Activated CD4-positive, alpha-beta memory T cell treated with anti-CD3 and anti-CD28 coated beads for 36 hours (primary cell): ENCODE measurements at regions of chr3 and their contacts with region 1.

Region 1: DNA sequence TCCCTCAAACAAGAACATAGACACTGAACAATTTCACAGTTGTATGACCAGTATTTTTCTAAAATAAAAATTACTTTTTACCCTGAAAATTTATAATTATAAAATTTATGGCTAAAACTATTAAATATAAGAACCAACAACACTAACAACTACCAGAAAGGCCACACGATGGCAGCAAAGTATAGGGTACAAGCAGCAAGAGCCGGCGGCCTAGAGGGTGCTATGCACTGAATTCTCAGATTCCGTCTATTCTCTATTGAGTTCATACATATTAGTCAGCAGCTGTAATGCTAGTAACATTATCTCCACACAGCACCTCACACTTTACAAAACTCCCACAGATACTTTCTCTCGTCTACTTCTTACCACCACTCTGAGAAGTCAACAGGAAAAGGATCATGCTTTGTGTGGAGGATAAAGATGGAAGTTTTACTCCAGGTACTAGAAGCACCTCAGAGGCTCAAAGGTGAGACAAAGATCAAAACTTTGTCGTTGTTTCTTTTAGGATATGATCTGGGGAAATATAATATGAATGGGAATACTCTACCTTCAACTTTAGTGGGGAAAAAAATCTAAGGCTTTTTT is 160.5 kb downstream of the FGF12 start:
- DNase-seq: peak; percentile 74
- H3K4me3 Mint-ChIP-seq: no peak overlapping the region
- H3K27ac Mint-ChIP-seq: no peak overlapping the region
- H3K4me1 Mint-ChIP-seq: peaks cover 8% of the 10 kb centered on the region
- H3K27me3 Mint-ChIP-seq: peaks cover 9% of the 10 kb centered on the region

Region 2: GRCh38 chr3:192467230-192468140 is 99.3 kb before region 1 on chr3:
- CTCF ChIA-PET with region 1: interaction called, 3 read pairs
- POLR2A ChIA-PET with region 1: no interaction called
- intact Hi-C with region 1: loop called (anchors 5 kb)
- DNase-seq: peak; percentile 57
- H3K4me3 Mint-ChIP-seq: no peak overlapping the region
- H3K27ac Mint-ChIP-seq: no peak overlapping the region
- H3K4me1 Mint-ChIP-seq: no peaks in the 10 kb centered on the region
- H3K27me3 Mint-ChIP-seq: peaks cover 18% of the 10 kb centered on the region

Region 3: GRCh38 chr3:192802957-192803899 is 236.4 kb after region 1 on chr3:
- CTCF ChIA-PET with region 1: interaction called, 19 read pairs
- POLR2A ChIA-PET with region 1: no interaction called
- intact Hi-C with region 1: loop called (anchors 1 kb)
- DNase-seq: no peak
- H3K4me3 Mint-ChIP-seq: no peak overlapping the region
- H3K27ac Mint-ChIP-seq: no peak overlapping the region
- H3K4me1 Mint-ChIP-seq: no peaks in the 10 kb centered on the region
- H3K27me3 Mint-ChIP-seq: no peaks in the 10 kb centered on the region

Region 4: DNA sequence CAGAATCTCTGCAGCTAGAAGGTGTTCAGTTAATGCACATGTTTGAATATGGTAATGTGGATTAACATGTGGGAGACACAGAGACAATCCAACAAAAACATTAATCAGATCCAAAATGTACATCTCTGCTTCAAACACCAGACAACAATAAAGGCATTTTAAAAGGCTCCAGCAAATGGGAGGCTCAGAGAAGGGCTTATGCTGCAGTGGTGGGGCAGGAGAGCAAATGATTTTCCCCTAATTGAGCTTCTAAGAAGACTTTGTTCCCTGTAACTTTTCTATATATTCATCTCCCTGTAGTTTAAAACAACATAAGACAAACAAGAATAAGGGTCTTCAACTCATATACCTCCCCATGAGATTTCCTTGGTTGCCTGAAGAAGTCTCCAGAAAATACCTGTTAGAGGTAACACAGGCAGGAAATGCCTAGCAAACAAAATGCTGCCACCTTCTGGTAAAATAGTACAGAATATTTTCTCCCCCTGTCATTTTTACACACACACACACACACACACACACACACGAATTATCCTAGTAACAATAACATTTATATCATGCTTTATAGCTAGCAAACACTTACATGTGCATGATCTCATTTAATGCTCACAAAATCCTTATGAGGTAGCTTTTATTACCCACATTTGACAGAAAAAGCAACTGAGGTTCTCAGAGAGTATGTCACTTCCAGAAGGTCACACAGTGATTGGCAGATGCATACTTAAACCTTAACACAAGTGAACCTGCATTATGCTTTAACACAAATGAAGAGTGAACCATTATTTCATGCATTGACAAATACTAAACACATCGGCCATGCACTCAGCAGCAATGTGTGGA is 474.3 kb after region 1 on chr3:
- CTCF ChIA-PET with region 1: interaction called, 3 read pairs
- POLR2A ChIA-PET with region 1: no interaction called
- intact Hi-C with region 1: loop called (anchors 2 kb)
- DNase-seq: no peak
- H3K4me3 Mint-ChIP-seq: no peak overlapping the region
- H3K27ac Mint-ChIP-seq: no peak overlapping the region
- H3K4me1 Mint-ChIP-seq: no peaks in the 10 kb centered on the region
- H3K27me3 Mint-ChIP-seq: no peaks in the 10 kb centered on the region

Region 5: DNA sequence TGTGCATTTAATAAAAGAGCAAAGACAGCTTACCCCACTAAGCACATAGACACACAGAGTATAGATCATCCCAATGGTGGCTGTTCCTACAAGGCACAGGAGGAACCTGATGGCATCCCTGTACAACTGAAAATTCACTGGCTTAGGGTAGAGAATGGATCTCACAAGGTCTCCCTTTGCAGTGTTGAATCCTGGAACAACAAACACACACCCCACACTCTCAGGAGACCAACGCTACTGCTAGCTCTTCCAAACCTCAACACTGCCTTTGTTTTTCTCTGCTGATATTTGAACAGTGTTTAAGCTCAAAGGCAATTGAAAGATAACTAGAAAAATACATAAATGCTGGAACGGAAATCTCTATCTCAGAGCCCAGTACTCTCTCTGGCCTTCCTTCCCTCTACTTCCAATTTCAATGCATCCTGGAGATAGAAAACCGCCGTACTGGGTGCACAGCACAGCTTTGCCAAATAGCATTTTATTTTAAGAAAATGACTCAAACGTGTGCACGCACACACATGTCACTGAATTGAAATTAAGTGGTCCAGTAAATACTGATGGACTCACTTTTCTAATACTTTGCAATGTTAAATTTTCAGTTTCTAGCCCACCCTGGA is 899.3 kb after region 1 on chr3:
- CTCF ChIA-PET with region 1: no interaction called
- POLR2A ChIA-PET with region 1: no interaction called
- intact Hi-C with region 1: loop called (anchors 1 kb)
- DNase-seq: no peak
- H3K4me3 Mint-ChIP-seq: no peak overlapping the region
- H3K27ac Mint-ChIP-seq: no peak overlapping the region
- H3K4me1 Mint-ChIP-seq: peaks cover 2% of the 10 kb centered on the region
- H3K27me3 Mint-ChIP-seq: no peaks in the 10 kb centered on the region

Region 6: DNA sequence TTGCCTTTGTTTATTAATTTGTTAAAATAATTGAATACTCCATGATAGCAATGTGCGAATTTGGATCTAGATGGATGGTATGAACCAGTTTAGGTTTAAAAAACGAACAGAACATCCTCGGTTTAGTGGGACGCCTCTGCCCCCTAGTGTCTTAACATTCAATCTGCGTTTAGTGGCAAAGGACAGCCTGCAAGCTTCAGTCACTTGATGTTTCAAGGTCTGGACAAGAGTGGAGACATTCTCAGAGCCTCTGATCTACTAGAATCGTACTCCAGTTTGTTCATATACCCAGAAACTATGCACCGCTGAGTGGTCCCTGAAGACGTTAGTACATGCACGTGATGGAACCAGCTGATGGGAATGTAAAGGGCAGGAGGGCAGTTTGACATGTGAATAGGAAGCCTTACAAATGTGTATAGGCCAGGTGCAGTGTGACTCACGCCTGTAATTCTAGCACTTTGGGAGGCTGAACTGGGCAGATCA is 1005.7 kb after region 1 on chr3:
- CTCF ChIA-PET with region 1: interaction called, 4 read pairs
- POLR2A ChIA-PET with region 1: no interaction called
- intact Hi-C with region 1: loop called (anchors 2 kb)
- DNase-seq: peak; percentile 64
- H3K4me3 Mint-ChIP-seq: no peak overlapping the region
- H3K27ac Mint-ChIP-seq: no peak overlapping the region
- H3K4me1 Mint-ChIP-seq: no peaks in the 10 kb centered on the region
- H3K27me3 Mint-ChIP-seq: no peaks in the 10 kb centered on the region